HEK293 (cell line): ENCODE measurements at regions of chr14 and their contacts with region 1.

Region 1: DNA sequence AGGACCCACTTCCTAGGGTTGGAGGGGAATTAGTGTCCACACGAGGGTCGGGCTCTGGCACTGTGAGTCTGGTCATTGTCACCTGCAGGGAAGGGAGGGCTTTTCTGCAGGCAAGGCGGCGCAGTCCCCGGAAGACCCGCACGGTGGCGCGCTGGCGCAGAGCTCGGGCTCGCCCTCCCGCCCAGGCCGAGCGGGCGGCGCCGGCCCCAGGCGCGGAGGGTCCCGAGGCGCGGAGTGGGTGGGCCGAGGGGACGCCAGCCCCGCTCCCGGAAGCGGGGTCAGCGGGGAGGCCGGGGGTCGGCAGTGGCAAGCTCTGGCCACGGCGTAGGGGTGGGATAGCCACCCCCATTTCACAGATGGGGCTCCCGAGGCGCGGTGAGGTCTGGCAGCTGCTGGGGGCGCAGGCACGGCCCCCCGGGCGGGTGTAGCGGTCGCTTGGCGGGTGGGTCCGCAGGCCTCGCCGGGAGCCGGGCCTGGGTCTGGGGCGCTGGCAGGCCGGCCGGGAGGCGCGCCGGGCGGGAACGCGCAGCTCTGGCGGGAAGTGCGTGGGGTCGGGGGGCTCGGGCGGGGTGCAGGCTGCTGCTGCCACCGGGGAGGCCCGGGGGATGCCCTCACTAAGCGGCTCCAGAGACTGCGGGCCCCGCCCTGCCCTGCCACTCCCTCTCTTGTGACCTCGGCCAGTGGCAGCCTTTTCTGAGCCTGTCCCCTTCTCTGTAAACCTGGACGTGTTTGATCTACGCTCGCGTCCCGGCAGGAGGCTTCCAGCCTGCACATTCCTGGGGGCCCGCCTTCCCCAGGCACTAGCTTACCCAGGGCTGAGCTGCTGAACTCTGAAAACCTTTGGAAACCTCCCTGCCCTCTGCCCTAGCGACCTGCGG is 46.1 kb downstream of the CYP46A1 start:
- H3K4me3 ChIP-seq: peak overlapping the region; percentile 52
- H3K27ac ChIP-seq: peak overlapping the region; percentile 54; the same call in 1 of the 2 replicates
- H3K4me1 ChIP-seq: no peaks in the 10 kb centered on the region
- CTCF ChIP-seq: peak; percentile 56; the same call in 1 of the 2 replicates

Region 2: GRCh38 chr14:99793213-99794150 is 63.3 kb after region 1 on chr14 and contains the start of gene EML1:
- CTCF ChIA-PET with region 1: interaction called, 13 read pairs
- POLR2A ChIA-PET with region 1: no interaction called
- H3K4me3 ChIP-seq: peak within 1 kb of the TSS; percentile 63
- H3K27ac ChIP-seq: peak within 1 kb of the TSS; percentile 90
- H3K4me1 ChIP-seq: peaks cover 11% of the 10 kb centered on the region
- CTCF ChIP-seq: no peak

Region 3: DNA sequence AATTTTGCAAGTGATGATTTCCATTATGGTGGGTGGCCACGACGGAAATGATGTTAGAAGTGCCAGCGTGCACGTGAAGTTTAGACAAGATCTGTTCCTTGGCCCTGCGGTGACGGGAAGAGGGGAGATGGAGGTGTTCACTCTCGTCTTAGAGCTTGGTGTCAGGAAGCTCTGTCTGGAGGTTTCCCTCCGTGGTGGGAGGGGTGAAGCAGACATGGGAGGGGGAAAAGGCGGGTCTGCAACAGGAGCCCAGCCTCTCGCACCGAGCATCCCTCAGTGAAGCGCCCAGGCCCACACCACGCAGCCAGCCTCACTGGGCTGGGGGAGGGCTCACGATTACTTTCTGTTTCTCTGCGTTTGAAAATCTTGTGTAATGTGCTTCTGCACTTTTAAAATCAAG is 89.3 kb after region 1 on chr14:
- CTCF ChIA-PET with region 1: interaction called, 15 read pairs
- POLR2A ChIA-PET with region 1: interaction called, 4 read pairs
- H3K4me3 ChIP-seq: no peak overlapping the region
- H3K27ac ChIP-seq: no peak overlapping the region
- H3K4me1 ChIP-seq: peaks cover 22% of the 10 kb centered on the region
- CTCF ChIP-seq: no peak

Region 4: GRCh38 chr14:99884834-99885648 is 154.8 kb after region 1 on chr14:
- CTCF ChIA-PET with region 1: interaction called, 12 read pairs
- POLR2A ChIA-PET with region 1: no interaction called
- H3K4me3 ChIP-seq: no peak overlapping the region
- H3K27ac ChIP-seq: no peak overlapping the region
- H3K4me1 ChIP-seq: peaks cover 3% of the 10 kb centered on the region; the same call in 1 of the 2 replicates
- CTCF ChIP-seq: peak; percentile 44; the same call in 1 of the 2 replicates

Region 5: GRCh38 chr14:99907761-99908652 is 177.8 kb after region 1 on chr14:
- CTCF ChIA-PET with region 1: no interaction called
- POLR2A ChIA-PET with region 1: no interaction called
- H3K4me3 ChIP-seq: no peak overlapping the region
- H3K27ac ChIP-seq: no peak overlapping the region
- H3K4me1 ChIP-seq: no peaks in the 10 kb centered on the region
- CTCF ChIP-seq: no peak